Activated CD8-positive, alpha-beta T cell treated with anti-CD3 and anti-CD28 coated beads, Interleukin-2, amount 10 ng/mL, durations not matched to agents 7 days and 5 days (primary cell): ENCODE measurements at regions of chr20 and their contacts with region 1.

Region 1: GRCh38 chr20:53750827-53751619 is 157.4 kb upstream of the ZNF217 start:
- DNase-seq: peak; percentile 77
- ATAC-seq: peak; percentile 76
- H3K4me3 Mint-ChIP-seq: peak overlapping the region; percentile 56
- H3K27ac Mint-ChIP-seq: peak overlapping the region; percentile 94
- H3K4me1 Mint-ChIP-seq: peaks cover 76% of the 10 kb centered on the region
- H3K27me3 Mint-ChIP-seq: no peaks in the 10 kb centered on the region

Region 2: GRCh38 chr20:53463101-53463972 is 287.7 kb before region 1 on chr20:
- CTCF ChIA-PET with region 1: no interaction called
- POLR2A ChIA-PET with region 1: no interaction called
- DNase-seq: no peak
- ATAC-seq: no peak
- H3K4me3 Mint-ChIP-seq: no peak overlapping the region
- H3K27ac Mint-ChIP-seq: no peak overlapping the region
- H3K4me1 Mint-ChIP-seq: no peaks in the 10 kb centered on the region
- H3K27me3 Mint-ChIP-seq: peaks cover 5% of the 10 kb centered on the region

Region 3: GRCh38 chr20:53578492-53579222 is 172.4 kb before region 1 on chr20:
- CTCF ChIA-PET with region 1: interaction called, 10 read pairs
- POLR2A ChIA-PET with region 1: interaction called, 5 read pairs
- DNase-seq: peak; percentile 84
- ATAC-seq: peak; percentile 35
- H3K4me3 Mint-ChIP-seq: peak overlapping the region; percentile 80
- H3K27ac Mint-ChIP-seq: peak overlapping the region; percentile 81
- H3K4me1 Mint-ChIP-seq: peaks cover 87% of the 10 kb centered on the region
- H3K27me3 Mint-ChIP-seq: no peaks in the 10 kb centered on the region

Region 4: GRCh38 chr20:53623454-53624211 is 127.4 kb before region 1 on chr20:
- CTCF ChIA-PET with region 1: interaction called, 18 read pairs
- POLR2A ChIA-PET with region 1: interaction called, 3 read pairs
- DNase-seq: peak; percentile 56
- ATAC-seq: peak; percentile 75
- H3K4me3 Mint-ChIP-seq: peak overlapping the region; percentile 72
- H3K27ac Mint-ChIP-seq: peak overlapping the region; percentile 97
- H3K4me1 Mint-ChIP-seq: peaks cover 56% of the 10 kb centered on the region
- H3K27me3 Mint-ChIP-seq: no peaks in the 10 kb centered on the region

Region 5: DNA sequence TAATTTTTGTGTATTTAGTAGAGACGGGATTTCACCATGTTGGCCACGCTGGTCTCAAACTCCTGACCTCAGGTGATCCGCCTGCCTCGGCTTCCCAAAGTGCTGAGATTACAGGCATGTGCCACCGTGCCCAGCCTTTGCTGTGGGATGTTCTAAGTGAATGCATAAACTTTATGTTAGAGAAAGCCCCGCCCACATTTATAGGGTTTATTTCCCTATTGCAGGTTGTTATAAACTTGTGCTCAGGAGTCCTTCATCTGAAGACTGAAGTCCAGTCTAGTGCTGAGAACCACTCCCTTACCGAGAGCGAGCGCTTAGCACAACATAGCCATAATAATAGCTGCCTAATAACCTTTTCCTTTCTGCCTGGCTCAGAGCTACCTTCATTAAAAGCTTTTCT is 82.0 kb before region 1 on chr20:
- CTCF ChIA-PET with region 1: no interaction called
- POLR2A ChIA-PET with region 1: no interaction called
- DNase-seq: no peak
- ATAC-seq: no peak
- H3K4me3 Mint-ChIP-seq: no peak overlapping the region
- H3K27ac Mint-ChIP-seq: no peak overlapping the region
- H3K4me1 Mint-ChIP-seq: peaks cover 7% of the 10 kb centered on the region
- H3K27me3 Mint-ChIP-seq: no peaks in the 10 kb centered on the region

Region 6: DNA sequence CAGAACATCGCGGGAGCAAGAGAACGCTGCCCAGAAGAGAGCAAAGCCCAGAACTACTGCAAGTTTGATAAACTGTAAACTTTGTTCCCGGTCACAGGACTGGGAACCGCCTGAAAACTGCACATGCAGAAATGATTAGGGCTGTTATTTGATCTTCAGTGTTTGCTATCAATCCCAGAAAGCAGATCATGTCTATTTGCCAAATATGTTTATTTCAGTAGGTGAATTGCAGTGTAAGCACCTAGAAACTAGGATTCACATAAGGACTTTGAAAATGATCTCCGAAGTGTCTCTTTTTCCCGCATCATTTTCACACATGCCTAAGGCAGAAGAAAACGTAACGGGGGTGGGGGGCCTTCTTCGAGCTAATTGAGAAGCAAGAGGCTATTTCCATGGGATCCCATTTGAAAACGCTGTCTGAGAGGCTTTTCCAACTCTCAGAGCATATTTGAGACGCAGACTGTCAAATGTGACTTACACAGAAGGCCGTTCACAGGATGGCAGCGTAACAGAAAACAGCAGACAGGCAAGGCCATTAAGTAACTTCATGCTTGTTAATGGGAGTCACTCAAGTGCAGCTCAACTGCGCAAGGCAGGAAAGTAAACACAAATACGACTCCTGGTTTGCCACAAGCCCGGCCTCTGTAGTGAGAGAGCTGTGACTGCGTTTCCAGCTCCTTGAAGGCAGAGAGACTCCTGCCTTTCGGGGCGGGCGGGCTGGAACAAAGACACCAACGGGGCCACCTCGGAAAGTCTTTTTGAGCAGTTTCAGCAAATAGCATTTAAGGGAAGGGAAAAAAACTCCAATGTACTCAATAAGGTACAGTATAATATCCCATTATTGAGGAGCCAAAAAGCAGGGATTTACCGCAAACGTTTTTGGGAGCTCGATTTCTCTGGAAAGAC is 12.7 kb before region 1 on chr20:
- CTCF ChIA-PET with region 1: interaction called, 6 read pairs
- POLR2A ChIA-PET with region 1: interaction called, 10 read pairs
- DNase-seq: no peak
- ATAC-seq: no peak
- H3K4me3 Mint-ChIP-seq: no peak overlapping the region
- H3K27ac Mint-ChIP-seq: peak overlapping the region; percentile 91
- H3K4me1 Mint-ChIP-seq: peaks cover 71% of the 10 kb centered on the region
- H3K27me3 Mint-ChIP-seq: no peaks in the 10 kb centered on the region

Region 7: GRCh38 chr20:53829724-53830521 is 78.9 kb after region 1 on chr20:
- CTCF ChIA-PET with region 1: interaction called, 4 read pairs
- POLR2A ChIA-PET with region 1: interaction called, 12 read pairs
- DNase-seq: peak; percentile 56
- ATAC-seq: peak; percentile 62
- H3K4me3 Mint-ChIP-seq: peak overlapping the region; percentile 72
- H3K27ac Mint-ChIP-seq: peak overlapping the region; percentile 91
- H3K4me1 Mint-ChIP-seq: peaks cover 86% of the 10 kb centered on the region
- H3K27me3 Mint-ChIP-seq: no peaks in the 10 kb centered on the region